Heart left ventricle (tissue), 16 donors: ENCODE measurements at regions of chr1 and their contacts with region 1.

Region 1: GRCh38 chr1:27111626-27112573 is 43.0 kb downstream of the SLC9A1 start:
- DNase-seq: peak; percentile 79 to 92 (median 82)
- ATAC-seq: peak; percentile 58 to 95 (median 94)
- H3K4me3 ChIP-seq: no peak overlapping the region
- H3K27ac ChIP-seq: peak overlapping the region in 9 of 12 donors; percentile 25 to 80 (median 54)
- H3K4me1 ChIP-seq: peaks cover 0 to 64% (median 26%) of the 10 kb centered on the region in 12 donors
- H3K27me3 ChIP-seq: no peaks in the 10 kb centered on the region
- CTCF ChIP-seq: peak in 6 of 12 donors; percentile 16 to 37 (median 22)
- POLR2A ChIP-seq: peak in 1 of 2 donors; percentile 21

Region 2: DNA sequence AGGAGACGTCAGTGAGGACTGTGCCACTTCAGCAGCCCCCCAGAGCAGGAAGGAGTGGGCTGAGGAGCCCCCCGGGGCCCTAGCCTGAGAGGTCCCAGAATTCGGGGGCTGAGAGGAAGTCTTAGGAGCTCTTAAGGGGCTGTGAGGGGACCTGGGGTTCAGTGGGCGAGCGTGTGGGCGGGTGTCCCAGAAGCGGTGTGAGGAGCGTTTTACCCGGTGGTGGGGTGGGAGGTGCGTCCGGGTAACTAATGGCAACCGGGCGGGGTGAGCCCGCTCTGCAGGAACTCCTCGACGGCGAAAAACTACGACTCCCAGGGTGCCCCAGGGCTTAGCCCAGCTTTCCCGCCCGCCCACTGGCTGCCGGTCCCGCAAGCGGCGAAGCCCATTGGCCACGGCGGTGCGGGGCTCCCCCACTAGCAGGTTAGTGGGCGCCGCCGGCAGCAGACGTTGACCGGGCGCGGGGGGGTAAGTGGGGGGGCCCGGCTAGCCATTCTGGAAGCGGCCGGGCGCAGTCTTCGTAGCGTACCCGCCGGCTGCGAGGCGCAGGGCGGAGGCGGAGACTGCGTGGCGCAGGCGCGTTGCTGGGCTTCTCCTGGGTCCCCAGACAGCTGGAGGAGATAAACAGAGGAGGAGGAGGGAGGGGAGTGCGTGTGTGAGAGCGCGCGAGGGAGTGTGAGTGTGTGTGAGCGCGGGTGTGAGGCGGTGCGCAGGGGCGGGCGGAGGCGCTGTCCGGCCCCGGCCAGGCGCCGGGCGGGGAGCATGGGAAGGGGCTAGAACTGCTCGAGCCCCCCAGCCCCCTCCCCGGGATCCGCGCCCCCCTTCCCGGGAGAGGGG is 122.4 kb after region 1 on chr1 and contains the start of gene WDTC1:
- intact Hi-C with region 1: loop called in 1 of 10 experiments (anchors 5 kb)
- DNase-seq: peak; percentile 98 to 99 (median 99)
- ATAC-seq: peak; percentile 98 to 99 (median 99)
- H3K4me3 ChIP-seq: peak within 1 kb of the TSS; percentile 71 to 98 (median 88)
- H3K27ac ChIP-seq: peak within 1 kb of the TSS; percentile 12 to 91 (median 82)
- H3K4me1 ChIP-seq: peaks cover 0 to 36% (median 13%) of the 10 kb centered on the region in 12 donors
- H3K27me3 ChIP-seq: no peaks in the 10 kb centered on the region
- CTCF ChIP-seq: no peak
- POLR2A ChIP-seq: peak in 1 of 2 donors; percentile 91
- total RNA-seq, gene WDTC1: 54.7 to 94.5 (median 60.3) TPM